ENCODE measurements at regions of chr5 and their contacts with region 1.

Region 1: GRCh38 chr5:154603978-154604679 is 126.1 kb upstream of the HAND1 start:
- DNase-seq: peak in 4 of 5 donors; percentile 25 to 67 (median 53)
- ATAC-seq: peak in 3 of 4 donors; percentile 77 to 80 (median 79)
- H3K4me3 ChIP-seq: peak overlapping the region in 8 of 12 donors; percentile 8 to 34 (median 24)
- H3K27ac ChIP-seq: no peak overlapping the region
- H3K4me1 ChIP-seq: peaks cover 0 to 7% (median 0%) of the 10 kb centered on the region in 12 donors
- H3K27me3 ChIP-seq: peaks cover 0 to 34% (median 7%) of the 10 kb centered on the region in 9 donors
- CTCF ChIP-seq: no peak
- POLR2A ChIP-seq: no peak

Region 2: GRCh38 chr5:154520861-154521453 is 83.2 kb before region 1 on chr5:
- intact Hi-C with region 1: loop called in 4 of 10 experiments (anchors 5 to 10 kb)
- DNase-seq: no peak
- ATAC-seq: no peak
- H3K4me3 ChIP-seq: no peak overlapping the region
- H3K27ac ChIP-seq: no peak overlapping the region
- H3K4me1 ChIP-seq: peaks cover 0 to 18% (median 4%) of the 10 kb centered on the region in 12 donors
- H3K27me3 ChIP-seq: peaks cover 0 to 41% (median 12%) of the 10 kb centered on the region in 9 donors
- CTCF ChIP-seq: peak; percentile 40 to 63 (median 44)
- POLR2A ChIP-seq: no peak